ENCODE measurements at regions of chr18 and their contacts with region 1.

Region 1: DNA sequence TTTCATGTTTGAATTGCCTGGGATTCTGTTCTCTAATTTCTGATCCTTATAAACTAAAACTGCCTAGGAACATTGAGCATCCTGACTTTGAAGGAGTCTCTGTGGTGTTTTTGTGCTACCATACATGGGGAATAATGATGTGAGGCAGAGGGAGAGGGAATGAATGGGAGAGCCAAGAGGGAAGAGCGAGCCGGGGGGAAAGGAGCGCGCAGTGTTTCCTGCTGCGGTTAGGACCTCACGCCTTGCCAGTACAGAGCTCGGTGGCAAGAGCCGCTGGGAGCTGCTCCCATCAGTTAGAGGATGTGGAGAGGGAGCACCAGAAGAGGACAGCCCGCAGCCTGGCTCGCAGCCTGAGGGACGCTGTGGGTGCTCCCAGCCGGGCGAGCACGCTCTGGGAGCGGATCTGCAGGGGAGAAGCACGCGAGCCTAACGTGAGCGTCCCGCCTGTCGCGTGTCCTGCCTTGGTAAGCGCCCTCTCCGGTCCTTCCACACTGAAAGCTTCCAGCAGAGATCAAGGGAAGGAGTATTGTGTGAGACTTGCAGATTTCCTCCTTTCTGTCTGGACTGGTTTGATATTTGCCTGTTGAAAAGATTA is 114.7 kb downstream of the FAM210A start:
- DNase-seq: peak; percentile 24
- H3K4me3 ChIP-seq: peak overlapping the region in 1 of 3 experiments; percentile 27
- H3K27ac ChIP-seq: no peak overlapping the region
- H3K4me1 ChIP-seq: peaks cover 13% of the 10 kb centered on the region
- H3K27me3 ChIP-seq: peaks cover 15 to 16% of the 10 kb centered on the region in 2 experiments
- CTCF ChIP-seq: no peak
- POLR2A ChIP-seq: no peak

Region 2: DNA sequence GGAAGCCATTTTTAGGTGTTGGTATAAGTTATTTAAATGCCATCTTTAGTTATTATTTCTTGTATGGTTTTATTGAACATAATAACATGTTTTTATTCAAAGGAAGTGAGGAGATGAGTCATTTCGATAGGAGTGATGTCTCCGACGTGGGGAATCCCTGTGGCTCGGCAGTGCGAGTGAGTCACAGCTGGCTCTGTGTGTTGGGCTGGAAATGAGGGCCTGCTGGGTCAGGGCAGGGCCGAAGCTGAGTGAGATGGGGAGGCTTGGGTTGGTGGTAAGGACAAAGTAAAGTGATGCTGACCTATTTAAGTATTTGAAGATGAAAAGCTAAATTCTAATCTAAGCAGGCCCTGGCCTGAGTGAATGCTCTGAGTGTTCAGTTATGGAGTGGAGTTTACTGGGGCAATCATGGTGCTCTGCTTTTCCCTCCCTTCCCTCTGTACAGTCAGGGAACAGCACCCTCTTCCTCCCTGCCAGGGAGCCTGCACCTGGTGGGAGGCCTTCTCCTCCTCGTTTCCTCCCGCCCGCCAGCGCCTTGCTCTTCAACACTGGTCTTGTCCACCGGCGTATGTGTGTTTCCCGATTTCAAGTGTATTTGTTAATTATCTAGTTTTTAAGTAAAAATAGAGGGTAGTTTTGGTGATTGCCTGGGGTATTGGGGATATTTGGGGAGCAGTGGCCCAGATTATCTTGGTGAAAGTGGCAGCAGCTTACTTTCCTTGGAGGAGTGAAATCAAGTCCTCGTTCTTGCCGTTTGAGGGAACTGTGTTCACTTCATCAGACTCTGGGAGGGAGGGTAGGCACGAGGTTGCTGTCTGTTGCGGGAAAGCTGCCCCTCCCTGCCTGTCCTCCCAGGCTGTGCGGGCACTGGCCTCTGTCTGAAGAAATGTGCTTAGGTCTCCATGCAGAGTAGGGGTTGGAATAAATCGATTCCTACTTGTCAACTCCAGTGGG is 236.1 kb before region 1 on chr18:
- CTCF ChIA-PET with region 1: no interaction called
- POLR2A ChIA-PET with region 1: no interaction called
- dilution Hi-C with region 1: no loop called
- intact Hi-C with region 1: loop called (anchors 5 kb)
- DNase-seq: peak; percentile 97
- H3K4me3 ChIP-seq: peak overlapping the region in 1 of 3 experiments; percentile 20
- H3K27ac ChIP-seq: peak overlapping the region; percentile 90
- H3K4me1 ChIP-seq: peaks cover 23% of the 10 kb centered on the region
- H3K27me3 ChIP-seq: no peaks in the 10 kb centered on the region
- CTCF ChIP-seq: no peak
- POLR2A ChIP-seq: no peak

Region 3: DNA sequence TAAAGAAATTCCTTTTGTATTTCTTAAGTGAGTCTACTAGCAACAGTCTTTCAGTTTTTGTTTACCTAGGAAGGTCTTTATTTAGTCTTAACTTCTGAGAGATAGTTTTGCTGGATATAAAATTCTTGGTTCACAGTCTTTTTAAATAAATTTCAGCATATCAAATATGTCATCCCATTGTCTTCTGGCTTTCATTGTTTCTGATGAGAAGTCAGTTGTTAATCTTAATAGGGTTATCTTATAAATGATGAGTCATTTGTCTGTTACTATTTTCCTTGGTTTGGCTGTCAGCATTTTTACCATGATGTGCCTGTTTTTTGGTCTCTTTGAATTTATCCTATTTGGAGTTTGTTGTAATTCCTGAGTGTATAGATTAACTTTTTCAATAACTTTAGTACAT is 14.6 kb before region 1 on chr18:
- CTCF ChIA-PET with region 1: no interaction called
- POLR2A ChIA-PET with region 1: no interaction called
- dilution Hi-C with region 1: no loop called
- intact Hi-C with region 1: no loop called
- DNase-seq: no peak
- H3K4me3 ChIP-seq: no peak overlapping the region
- H3K27ac ChIP-seq: no peak overlapping the region
- H3K4me1 ChIP-seq: no peaks in the 10 kb centered on the region
- H3K27me3 ChIP-seq: no peaks in the 10 kb centered on the region
- CTCF ChIP-seq: no peak
- POLR2A ChIP-seq: no peak

Region 4: GRCh38 chr18:13635046-13635445 is 23.3 kb after region 1 on chr18:
- CTCF ChIA-PET with region 1: no interaction called
- POLR2A ChIA-PET with region 1: no interaction called
- dilution Hi-C with region 1: no loop called
- intact Hi-C with region 1: no loop called
- DNase-seq: no peak
- H3K4me3 ChIP-seq: no peak overlapping the region
- H3K27ac ChIP-seq: no peak overlapping the region
- H3K4me1 ChIP-seq: no peaks in the 10 kb centered on the region
- H3K27me3 ChIP-seq: peaks cover 0 to 3% of the 10 kb centered on the region in 2 experiments
- CTCF ChIP-seq: no peak
- POLR2A ChIP-seq: no peak

Region 5: DNA sequence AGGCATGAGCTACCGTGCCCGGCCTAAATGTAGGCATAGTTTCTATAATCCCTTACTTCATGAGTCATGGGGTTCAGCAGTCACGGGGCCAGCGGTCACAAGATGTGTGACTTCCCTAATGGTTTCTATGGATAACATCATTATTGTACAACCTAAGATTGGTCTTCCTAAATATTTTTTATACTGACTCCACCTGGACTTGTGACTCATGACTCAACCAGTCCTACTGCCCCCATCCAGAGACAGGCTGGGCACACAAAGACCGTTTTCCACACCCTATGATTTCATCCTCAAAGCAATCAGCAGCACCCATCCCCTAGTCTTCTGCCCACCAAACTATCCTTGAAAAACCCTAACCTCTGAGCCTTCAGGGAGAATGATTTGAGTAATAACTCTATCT is 98.8 kb after region 1 on chr18:
- CTCF ChIA-PET with region 1: no interaction called
- POLR2A ChIA-PET with region 1: no interaction called
- dilution Hi-C with region 1: no loop called
- intact Hi-C with region 1: no loop called
- DNase-seq: no peak
- H3K4me3 ChIP-seq: no peak overlapping the region
- H3K27ac ChIP-seq: no peak overlapping the region
- H3K4me1 ChIP-seq: no peaks in the 10 kb centered on the region
- H3K27me3 ChIP-seq: no peaks in the 10 kb centered on the region
- CTCF ChIP-seq: no peak
- POLR2A ChIP-seq: no peak